ENCODE measurements at regions of chr7 and their contacts with region 1.

Region 1: GRCh38 chr7:107194049-107194448 is 25.2 kb downstream of the HBP1 start:
- DNase-seq: no peak
- ATAC-seq: no peak
- H3K4me3 ChIP-seq: no peak overlapping the region
- H3K27ac ChIP-seq: no peak overlapping the region
- H3K4me1 ChIP-seq: no peaks in the 10 kb centered on the region
- H3K27me3 ChIP-seq: no peaks in the 10 kb centered on the region
- CTCF ChIP-seq: no peak; a peak in 1 of 6 replicates
- EP300 ChIP-seq: no peak
- POLR2A ChIP-seq: no peak
- RAD21 ChIP-seq: no peak

Region 2: GRCh38 chr7:107168233-107169119 is 25.6 kb before region 1 on chr7 and contains the start of gene HBP1:
- CTCF ChIA-PET with region 1: interaction called, 7 read pairs
- POLR2A ChIA-PET with region 1: interaction called, 7 read pairs
- RAD21 ChIA-PET with region 1: interaction called, 11 read pairs
- SMC1A ChIA-PET with region 1: interaction called, 28 read pairs
- in situ Hi-C with region 1: no loop called
- intact Hi-C with region 1: no loop called
- DNase-seq: peak; percentile 100
- ATAC-seq: peak; percentile 90
- H3K4me3 ChIP-seq: peak within 1 kb of the TSS; percentile 86
- H3K27ac ChIP-seq: peak within 1 kb of the TSS; percentile 90
- H3K4me1 ChIP-seq: peaks cover 17% of the 10 kb centered on the region
- H3K27me3 ChIP-seq: no peaks in the 10 kb centered on the region
- CTCF ChIP-seq: no peak
- EP300 ChIP-seq: peak in 1 of 2 experiments; percentile 26; a peak in 1 of 4 replicates
- POLR2A ChIP-seq: peak; percentile 78
- RAD21 ChIP-seq: no peak
- polyA plus RNA-seq, gene HBP1: 8.5 to 10.2 TPM

Region 3: DNA sequence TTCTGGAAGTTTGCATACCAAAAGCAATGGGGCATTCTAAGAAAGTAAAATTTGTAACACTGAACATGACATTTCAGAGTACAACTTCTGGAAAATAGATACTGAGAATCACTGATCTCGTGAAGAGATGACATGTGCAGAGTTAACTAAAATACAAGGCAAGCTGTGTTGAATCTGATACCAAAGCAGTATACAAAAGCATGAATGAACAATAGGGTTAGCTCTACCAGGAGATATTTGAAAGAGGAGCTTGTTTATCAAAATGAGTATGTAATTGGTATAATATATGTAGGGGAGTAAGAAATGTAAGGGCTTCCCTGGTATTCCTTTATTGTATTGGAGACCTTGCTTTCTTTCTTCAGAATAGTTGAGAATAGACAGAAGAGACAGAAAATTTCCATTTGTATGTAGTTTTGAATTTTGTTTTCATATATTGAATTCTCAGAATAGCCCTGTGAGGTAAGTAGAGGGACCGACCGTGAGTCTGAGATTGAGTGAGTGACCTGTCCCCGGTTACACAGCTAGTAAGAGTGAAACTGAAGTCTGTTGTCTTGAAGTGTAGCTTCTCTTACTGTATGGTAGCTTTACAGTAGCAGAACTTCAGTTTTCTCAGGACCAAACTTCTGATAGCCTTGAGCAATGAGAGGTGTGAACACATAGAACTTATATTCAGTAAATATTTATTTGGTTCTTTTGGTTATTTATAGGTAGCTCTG is 20.2 kb before region 1 on chr7:
- CTCF ChIA-PET with region 1: interaction called, 7 read pairs
- POLR2A ChIA-PET with region 1: interaction called, 7 read pairs
- RAD21 ChIA-PET with region 1: interaction called, 11 read pairs
- SMC1A ChIA-PET with region 1: interaction called, 28 read pairs
- in situ Hi-C with region 1: no loop called
- intact Hi-C with region 1: no loop called
- DNase-seq: no peak
- ATAC-seq: peak; percentile 68
- H3K4me3 ChIP-seq: no peak overlapping the region
- H3K27ac ChIP-seq: peak overlapping the region; percentile 15; the same call in 1 of the 2 replicates
- H3K4me1 ChIP-seq: peaks cover 26% of the 10 kb centered on the region
- H3K27me3 ChIP-seq: no peaks in the 10 kb centered on the region
- CTCF ChIP-seq: no peak
- EP300 ChIP-seq: no peak
- POLR2A ChIP-seq: no peak
- RAD21 ChIP-seq: no peak

Region 4: DNA sequence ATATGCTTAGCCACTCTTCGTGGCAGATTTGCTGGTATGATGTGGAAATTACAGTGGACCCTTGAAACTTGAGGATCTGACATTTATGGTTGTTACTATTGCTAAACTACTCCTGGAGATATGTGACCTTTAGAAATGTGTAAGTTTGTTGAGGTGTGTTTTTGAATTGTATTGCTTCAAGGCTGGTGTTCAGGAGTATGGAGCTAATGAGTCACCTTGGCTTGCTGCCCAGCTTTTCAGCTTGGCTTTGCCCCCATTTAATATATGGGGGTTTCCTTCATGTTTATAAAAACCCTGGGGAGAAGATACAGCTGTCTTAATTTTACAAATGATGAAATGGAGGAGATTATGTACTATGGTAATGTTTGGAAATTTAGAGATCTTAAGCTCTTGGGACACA is 13.7 kb before region 1 on chr7:
- CTCF ChIA-PET with region 1: interaction called, 5 read pairs
- POLR2A ChIA-PET with region 1: no interaction called
- RAD21 ChIA-PET with region 1: interaction called, 4 read pairs
- SMC1A ChIA-PET with region 1: interaction called, 16 read pairs
- in situ Hi-C with region 1: no loop called
- intact Hi-C with region 1: no loop called
- DNase-seq: no peak
- ATAC-seq: peak; percentile 63
- H3K4me3 ChIP-seq: no peak overlapping the region
- H3K27ac ChIP-seq: no peak overlapping the region
- H3K4me1 ChIP-seq: no peaks in the 10 kb centered on the region
- H3K27me3 ChIP-seq: no peaks in the 10 kb centered on the region
- CTCF ChIP-seq: no peak
- EP300 ChIP-seq: no peak
- POLR2A ChIP-seq: no peak
- RAD21 ChIP-seq: no peak